ENCODE measurements at regions of chrX and their contacts with region 1.

Region 1: GRCh38 chrX:65581661-65582339 is 47.2 kb upstream of the LAS1L start:
- DNase-seq: peak; percentile 27
- H3K4me3 Mint-ChIP-seq: no peak overlapping the region
- H3K27ac Mint-ChIP-seq: no peak overlapping the region
- H3K4me1 Mint-ChIP-seq: peaks cover 14% of the 10 kb centered on the region
- H3K27me3 Mint-ChIP-seq: no peaks in the 10 kb centered on the region

Region 2: GRCh38 chrX:65866146-65866545 is 284.3 kb after region 1 on chrX:
- intact Hi-C with region 1: loop called (anchors 5 kb)
- DNase-seq: peak; percentile 31
- H3K4me3 Mint-ChIP-seq: no peak overlapping the region
- H3K27ac Mint-ChIP-seq: peak overlapping the region; percentile 67
- H3K4me1 Mint-ChIP-seq: peaks cover 24% of the 10 kb centered on the region
- H3K27me3 Mint-ChIP-seq: no peaks in the 10 kb centered on the region

Region 3: GRCh38 chrX:66110112-66110511 is 528.3 kb after region 1 on chrX:
- intact Hi-C with region 1: loop called (anchors 2 kb)
- DNase-seq: no peak
- H3K4me3 Mint-ChIP-seq: no peak overlapping the region
- H3K27ac Mint-ChIP-seq: no peak overlapping the region
- H3K4me1 Mint-ChIP-seq: peaks cover 8% of the 10 kb centered on the region
- H3K27me3 Mint-ChIP-seq: no peaks in the 10 kb centered on the region

Region 4: DNA sequence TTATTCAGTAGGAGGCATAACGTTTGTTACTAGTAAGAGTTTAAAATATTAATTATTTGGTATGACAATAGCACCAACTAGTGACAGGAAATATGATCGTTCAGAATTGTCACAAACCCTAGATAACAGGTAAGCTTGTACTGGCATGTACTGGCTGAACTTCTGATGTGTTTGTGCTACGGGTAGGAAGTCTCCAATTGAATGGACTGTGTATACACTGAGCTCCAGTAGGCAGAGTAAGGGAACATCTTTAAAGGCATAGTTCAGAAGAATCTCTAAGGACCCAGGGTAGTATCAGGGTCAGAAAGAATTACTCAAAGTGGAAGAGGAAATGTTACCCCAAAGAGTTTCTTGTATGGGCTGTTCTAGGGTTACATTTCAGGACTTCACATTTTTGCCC is 826.7 kb after region 1 on chrX:
- intact Hi-C with region 1: loop called (anchors 1 kb)
- DNase-seq: no peak
- H3K4me3 Mint-ChIP-seq: no peak overlapping the region
- H3K27ac Mint-ChIP-seq: no peak overlapping the region
- H3K4me1 Mint-ChIP-seq: no peaks in the 10 kb centered on the region
- H3K27me3 Mint-ChIP-seq: peaks cover 8% of the 10 kb centered on the region

Measured in activated T-helper 1 cell treated with anti-CD3 and anti-CD28 coated beads, Interleukin-12 subunit alpha, Interleukin-12 subunit beta, Interleukin-2, Interleukin-4 antibody, amounts not matched to agents 30 ng/mL and 10 ng/mL and 1 ng/mL, durations not matched to agents 14 hours and 24 hours and 36 hours (primary cell).